Cardiac septum (tissue), 1 donor: ENCODE measurements at regions of chr11 and their contacts with region 1.

Region 1: DNA sequence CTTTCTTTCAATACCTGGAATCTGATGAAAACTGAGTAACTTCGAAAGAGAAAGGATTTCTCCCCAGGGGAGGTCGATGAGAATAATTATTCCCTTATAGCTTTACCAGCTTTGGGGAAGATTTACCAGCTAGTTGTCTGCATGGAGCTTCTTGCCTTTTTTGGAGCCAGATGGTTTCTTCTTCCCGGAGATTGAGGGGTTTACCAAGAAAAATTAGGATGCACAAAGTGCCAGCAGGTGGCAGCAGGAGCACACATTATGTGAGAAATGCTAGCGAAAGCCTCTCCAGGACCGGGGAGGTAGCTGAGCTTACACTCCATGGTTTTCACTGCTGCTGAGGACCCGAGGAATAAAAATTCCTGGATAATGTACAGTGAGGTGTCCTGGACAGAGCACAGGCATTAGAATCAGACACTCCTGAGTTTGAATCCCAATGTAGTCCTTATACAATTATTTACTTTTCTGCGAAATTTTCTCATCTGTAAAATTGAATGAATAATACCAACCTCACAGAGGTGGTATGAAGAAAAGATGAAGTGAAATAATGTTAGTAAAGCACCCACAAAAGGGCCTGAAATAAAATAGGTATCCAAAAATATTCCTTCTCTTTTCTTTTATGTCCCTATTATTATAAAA is 46.0 kb upstream of the PARVA start:
- DNase-seq: no peak

Region 2: DNA sequence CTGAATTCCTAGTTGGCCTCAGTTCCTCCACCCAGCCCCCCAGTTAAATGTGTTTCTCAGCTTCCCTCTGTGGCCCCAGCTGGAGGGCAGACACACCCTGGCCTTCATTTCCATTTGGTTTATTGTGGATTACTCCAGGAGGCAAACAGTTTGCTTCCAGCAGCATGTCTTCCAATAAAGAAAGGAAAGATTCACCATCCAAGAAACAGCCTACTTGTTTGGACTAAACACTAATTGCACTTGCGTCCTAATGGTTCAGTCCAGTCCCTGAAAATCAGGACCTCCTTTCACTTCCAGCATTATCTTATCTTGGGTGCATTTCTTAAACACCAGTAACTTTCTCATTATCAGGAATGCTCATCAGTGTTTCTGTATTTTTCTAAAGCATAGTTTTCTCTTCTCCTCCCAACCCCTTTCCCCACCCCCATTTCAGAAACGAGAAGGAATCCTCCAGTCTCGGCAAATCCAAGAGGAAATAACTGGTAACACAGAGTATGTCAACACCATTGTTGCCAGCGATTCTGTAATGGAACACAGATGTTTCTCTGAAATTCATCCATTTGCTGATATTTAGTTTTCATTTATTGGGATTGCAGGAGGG is 176.9 kb after region 1 on chr11:
- intact Hi-C with region 1: loop called (anchors 10 kb)
- DNase-seq: no peak